ENCODE measurements at regions of chr12 and their contacts with region 1.

Region 1: DNA sequence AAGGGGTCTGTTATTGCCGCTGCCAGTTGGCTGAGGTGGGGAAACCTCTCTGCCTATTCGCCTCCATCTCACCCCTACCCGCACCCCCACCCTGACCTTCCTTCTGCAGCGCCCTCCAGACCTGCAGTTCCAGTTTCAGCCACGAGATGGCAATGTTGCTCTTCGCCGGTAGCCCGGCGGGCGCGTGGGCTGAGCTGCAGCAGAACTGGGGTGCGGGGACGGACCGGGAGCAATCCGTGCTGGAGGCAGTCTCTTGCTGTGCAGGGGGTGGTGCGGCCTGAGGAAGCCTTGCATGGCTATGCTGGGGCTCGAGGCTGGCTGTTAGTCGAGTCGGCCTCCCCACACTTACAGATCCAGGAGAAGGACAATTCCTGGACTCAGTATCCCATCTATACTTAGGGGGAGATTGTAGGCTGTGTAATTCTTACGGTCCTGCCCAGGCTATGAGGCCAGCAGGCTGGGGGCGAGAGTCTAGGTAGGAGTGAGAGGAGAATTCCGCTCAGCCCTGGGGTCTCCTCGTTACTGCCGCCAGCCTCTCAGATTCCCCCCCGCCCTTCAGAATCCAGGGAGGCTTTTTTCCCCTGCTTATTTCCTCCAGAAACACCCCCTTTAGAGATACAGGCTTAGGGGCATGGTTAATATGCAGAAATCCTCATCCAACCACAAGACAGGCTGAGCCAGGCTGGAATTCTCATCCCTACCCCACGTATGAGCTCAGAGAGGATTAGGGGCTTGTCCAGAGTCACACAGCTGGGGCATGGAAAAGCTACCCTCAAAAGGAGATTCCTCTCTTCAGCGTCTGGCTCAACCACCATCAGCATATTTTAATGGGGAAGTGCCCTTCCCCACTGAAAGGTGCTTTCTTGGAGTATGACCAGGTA is 118.2 kb downstream of the AACS start:
- DNase-seq: peak; percentile 78
- ATAC-seq: peak; percentile 73
- H3K4me3 Mint-ChIP-seq: no peak overlapping the region
- H3K27ac Mint-ChIP-seq: no peak overlapping the region
- H3K4me1 Mint-ChIP-seq: no peaks in the 10 kb centered on the region
- H3K27me3 Mint-ChIP-seq: peaks cover 59% of the 10 kb centered on the region

Region 2: GRCh38 chr12:125167658-125168057 is 15.8 kb before region 1 on chr12:
- CTCF ChIA-PET with region 1: interaction called, 11 read pairs
- DNase-seq: no peak
- ATAC-seq: no peak
- H3K4me3 Mint-ChIP-seq: no peak overlapping the region
- H3K27ac Mint-ChIP-seq: no peak overlapping the region
- H3K4me1 Mint-ChIP-seq: no peaks in the 10 kb centered on the region
- H3K27me3 Mint-ChIP-seq: no peaks in the 10 kb centered on the region

Region 3: DNA sequence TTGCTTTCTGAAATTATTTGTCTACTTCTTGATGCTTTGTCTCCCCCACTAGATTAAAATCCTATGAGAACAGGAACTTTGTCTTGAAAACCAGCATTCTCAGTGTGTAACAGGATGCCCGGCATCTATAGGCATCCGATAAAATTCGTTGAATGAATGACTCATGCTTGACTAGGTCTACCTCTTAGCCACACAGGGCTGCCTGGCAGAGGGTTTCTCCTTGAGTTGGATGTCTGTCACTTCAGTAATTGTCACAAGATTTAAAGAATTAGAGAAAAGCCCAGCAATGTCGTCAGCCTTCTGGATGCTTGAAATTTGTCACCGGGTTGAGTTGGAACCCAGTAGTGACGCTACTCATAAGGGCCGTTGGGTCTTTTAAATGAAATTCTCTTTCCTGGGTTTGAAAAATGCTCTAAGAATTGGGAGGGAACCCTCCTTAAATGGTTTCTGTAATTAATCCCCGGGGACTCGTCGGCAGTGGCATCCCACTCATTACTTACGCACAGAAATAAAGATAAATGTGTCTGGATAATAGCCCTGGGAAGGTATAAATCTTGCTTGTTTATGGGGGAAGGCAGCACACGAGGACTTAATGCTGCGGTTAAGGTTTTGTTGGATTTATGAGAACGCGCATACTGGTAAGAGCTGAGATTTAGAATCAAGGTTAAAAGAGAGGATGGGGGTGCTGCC is 75.9 kb after region 1 on chr12:
- CTCF ChIA-PET with region 1: no interaction called
- DNase-seq: no peak
- ATAC-seq: no peak
- H3K4me3 Mint-ChIP-seq: no peak overlapping the region
- H3K27ac Mint-ChIP-seq: no peak overlapping the region
- H3K4me1 Mint-ChIP-seq: no peaks in the 10 kb centered on the region
- H3K27me3 Mint-ChIP-seq: no peaks in the 10 kb centered on the region

Region 4: GRCh38 chr12:125402874-125403789 is 219.7 kb after region 1 on chr12:
- CTCF ChIA-PET with region 1: interaction called, 44 read pairs
- DNase-seq: no peak
- ATAC-seq: no peak
- H3K4me3 Mint-ChIP-seq: no peak overlapping the region
- H3K27ac Mint-ChIP-seq: no peak overlapping the region
- H3K4me1 Mint-ChIP-seq: peaks cover 8% of the 10 kb centered on the region
- H3K27me3 Mint-ChIP-seq: peaks cover 4% of the 10 kb centered on the region